Activated naive CD4-positive, alpha-beta T cell treated with anti-CD3 and anti-CD28 coated beads, Interleukin-2, amount 10 ng/mL, durations not matched to agents 7 days and 5 days (primary cell): ENCODE measurements at regions of chr16 and their contacts with region 1.

Region 1: GRCh38 chr16:4253394-4254150 is 11.7 kb upstream of the SRL start:
- DNase-seq: peak; percentile 100
- H3K4me3 Mint-ChIP-seq: peak overlapping the region; percentile 93
- H3K27ac Mint-ChIP-seq: peak overlapping the region; percentile 98
- H3K4me1 Mint-ChIP-seq: peaks cover 13% of the 10 kb centered on the region
- H3K27me3 Mint-ChIP-seq: no peaks in the 10 kb centered on the region

Region 2: GRCh38 chr16:3938848-3939624 is 314.5 kb before region 1 on chr16:
- CTCF ChIA-PET with region 1: interaction called, 13 read pairs
- DNase-seq: peak; percentile 71
- H3K4me3 Mint-ChIP-seq: no peak overlapping the region
- H3K27ac Mint-ChIP-seq: no peak overlapping the region
- H3K4me1 Mint-ChIP-seq: peaks cover 6% of the 10 kb centered on the region
- H3K27me3 Mint-ChIP-seq: peaks cover 22% of the 10 kb centered on the region

Region 3: GRCh38 chr16:3983081-3983520 is 270.5 kb before region 1 on chr16:
- CTCF ChIA-PET with region 1: interaction called, 34 read pairs
- DNase-seq: peak; percentile 69
- H3K4me3 Mint-ChIP-seq: no peak overlapping the region
- H3K27ac Mint-ChIP-seq: no peak overlapping the region
- H3K4me1 Mint-ChIP-seq: peaks cover 2% of the 10 kb centered on the region
- H3K27me3 Mint-ChIP-seq: peaks cover 8% of the 10 kb centered on the region

Region 4: GRCh38 chr16:4232541-4233386 is 20.8 kb before region 1 on chr16:
- CTCF ChIA-PET with region 1: interaction called, 15 read pairs
- DNase-seq: no peak
- H3K4me3 Mint-ChIP-seq: no peak overlapping the region
- H3K27ac Mint-ChIP-seq: no peak overlapping the region
- H3K4me1 Mint-ChIP-seq: no peaks in the 10 kb centered on the region
- H3K27me3 Mint-ChIP-seq: peaks cover 26% of the 10 kb centered on the region

Region 5: GRCh38 chr16:4271176-4272066 is 17.8 kb after region 1 on chr16:
- CTCF ChIA-PET with region 1: interaction called, 13 read pairs
- DNase-seq: peak; percentile 95
- H3K4me3 Mint-ChIP-seq: peak overlapping the region; percentile 80
- H3K27ac Mint-ChIP-seq: peak overlapping the region; percentile 93
- H3K4me1 Mint-ChIP-seq: peaks cover 21% of the 10 kb centered on the region
- H3K27me3 Mint-ChIP-seq: peaks cover 15% of the 10 kb centered on the region

Region 6: GRCh38 chr16:4288148-4288921 is 34.8 kb after region 1 on chr16:
- CTCF ChIA-PET with region 1: no interaction called
- DNase-seq: peak; percentile 87
- H3K4me3 Mint-ChIP-seq: no peak overlapping the region
- H3K27ac Mint-ChIP-seq: no peak overlapping the region
- H3K4me1 Mint-ChIP-seq: peaks cover 13% of the 10 kb centered on the region
- H3K27me3 Mint-ChIP-seq: peaks cover 54% of the 10 kb centered on the region

Region 7: GRCh38 chr16:4307215-4308037 is 53.9 kb after region 1 on chr16:
- CTCF ChIA-PET with region 1: interaction called, 11 read pairs
- DNase-seq: peak; percentile 97
- H3K4me3 Mint-ChIP-seq: peak overlapping the region; percentile 91
- H3K27ac Mint-ChIP-seq: peak overlapping the region; percentile 95
- H3K4me1 Mint-ChIP-seq: peaks cover 38% of the 10 kb centered on the region
- H3K27me3 Mint-ChIP-seq: peaks cover 28% of the 10 kb centered on the region

Region 8: DNA sequence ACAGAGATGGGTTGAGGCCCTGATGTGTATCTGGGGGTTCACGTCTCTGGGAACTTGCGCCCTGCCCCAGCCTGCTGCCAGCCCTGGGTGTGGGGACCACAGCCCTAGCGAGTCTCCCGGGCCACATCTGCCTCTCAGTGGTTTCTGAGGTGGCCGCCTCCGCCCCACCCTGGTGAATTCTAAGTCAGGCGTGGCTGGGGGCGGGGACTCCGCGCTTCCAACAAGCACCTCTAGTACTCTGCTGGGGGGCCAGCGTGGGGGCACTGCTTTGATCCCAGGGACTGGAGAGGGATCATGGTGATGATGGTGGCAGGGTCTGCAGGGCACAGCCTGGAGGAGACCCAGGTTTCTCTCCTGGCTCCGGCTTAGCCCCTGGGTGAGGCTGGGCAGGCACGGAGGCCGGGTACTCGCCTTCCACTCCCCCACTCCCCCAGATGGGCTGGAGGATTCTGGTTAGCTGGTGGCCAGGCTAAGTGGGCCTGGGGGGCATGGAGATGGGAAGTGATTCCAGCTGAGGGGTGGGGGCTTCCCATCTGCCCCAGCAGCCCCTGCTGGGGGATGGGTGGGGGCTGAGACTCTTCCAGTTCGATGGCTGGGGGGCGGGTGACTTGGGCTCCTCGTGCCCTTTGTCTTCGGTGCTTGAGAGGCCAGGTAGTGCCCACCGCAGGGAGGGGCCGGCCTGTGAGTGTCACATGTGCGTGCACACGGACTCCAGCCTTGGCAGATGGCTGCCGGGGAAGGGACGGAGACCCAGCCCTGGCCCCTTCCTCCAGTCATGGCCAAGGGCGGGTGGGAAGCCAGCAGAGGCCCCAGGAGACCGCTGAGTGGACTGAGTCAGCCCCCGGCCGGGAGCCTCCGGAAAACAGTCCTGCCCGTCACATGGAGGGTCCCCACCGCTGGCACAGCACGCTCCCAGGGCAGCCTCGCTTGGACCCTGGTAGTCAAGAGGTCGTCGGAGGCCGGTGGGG is 66.2 kb after region 1 on chr16:
- CTCF ChIA-PET with region 1: no interaction called
- DNase-seq: peak; percentile 74
- H3K4me3 Mint-ChIP-seq: no peak overlapping the region
- H3K27ac Mint-ChIP-seq: no peak overlapping the region
- H3K4me1 Mint-ChIP-seq: peaks cover 11% of the 10 kb centered on the region
- H3K27me3 Mint-ChIP-seq: peaks cover 61% of the 10 kb centered on the region

Region 9: GRCh38 chr16:4425378-4426020 is 171.9 kb after region 1 on chr16 and contains the start of gene DNAJA3:
- CTCF ChIA-PET with region 1: no interaction called
- DNase-seq: peak; percentile 94
- H3K4me3 Mint-ChIP-seq: peak within 1 kb of the TSS; percentile 88
- H3K27ac Mint-ChIP-seq: peak within 1 kb of the TSS; percentile 98
- H3K4me1 Mint-ChIP-seq: peaks cover 35% of the 10 kb centered on the region
- H3K27me3 Mint-ChIP-seq: no peaks in the 10 kb centered on the region